Ascending aorta (tissue), 2 donors: ENCODE measurements at regions of chr18 and their contacts with region 1.

Region 1: GRCh38 chr18:13112982-13113381 is 105.6 kb upstream of the LDLRAD4 start:
- DNase-seq: no peak
- H3K4me3 ChIP-seq: no peak overlapping the region
- H3K27ac ChIP-seq: no peak overlapping the region
- H3K4me1 ChIP-seq: no peaks in the 10 kb centered on the region
- H3K27me3 ChIP-seq: no peaks in the 10 kb centered on the region
- CTCF ChIP-seq: peak in 1 of 3 experiments; percentile 33

Region 2: GRCh38 chr18:13279181-13280069 is 166.4 kb after region 1 on chr18:
- intact Hi-C with region 1: no loop called
- DNase-seq: no peak
- H3K4me3 ChIP-seq: no peak overlapping the region
- H3K27ac ChIP-seq: no peak overlapping the region
- H3K4me1 ChIP-seq: peaks cover 4 to 23% of the 10 kb centered on the region in 2 donors
- H3K27me3 ChIP-seq: no peaks in the 10 kb centered on the region
- CTCF ChIP-seq: no peak

Region 3: GRCh38 chr18:13629841-13630715 is 517.1 kb after region 1 on chr18:
- intact Hi-C with region 1: loop called (anchors 10 kb)
- DNase-seq: no peak
- H3K4me3 ChIP-seq: no peak overlapping the region
- H3K27ac ChIP-seq: peak overlapping the region in 1 of 2 donors; percentile 34
- H3K4me1 ChIP-seq: peaks cover 3% of the 10 kb centered on the region in 2 donors
- H3K27me3 ChIP-seq: no peaks in the 10 kb centered on the region
- CTCF ChIP-seq: peak; percentile 45 to 80 (median 74)

Region 4: GRCh38 chr18:13688191-13689136 is 575.5 kb after region 1 on chr18:
- intact Hi-C with region 1: no loop called
- DNase-seq: no peak
- H3K4me3 ChIP-seq: no peak overlapping the region
- H3K27ac ChIP-seq: no peak overlapping the region
- H3K4me1 ChIP-seq: no peaks in the 10 kb centered on the region
- H3K27me3 ChIP-seq: no peaks in the 10 kb centered on the region
- CTCF ChIP-seq: no peak